Activated naive CD4-positive, alpha-beta T cell treated with anti-CD3 and anti-CD28 coated beads for 36 hours (primary cell): ENCODE measurements at regions of chr2 and their contacts with region 1.

Region 1: GRCh38 chr2:143397884-143398614 is 268.8 kb downstream of the ARHGAP15 start:
- DNase-seq: no peak
- H3K4me3 Mint-ChIP-seq: no peak overlapping the region
- H3K27ac Mint-ChIP-seq: peak overlapping the region; percentile 11
- H3K4me1 Mint-ChIP-seq: peaks cover 47% of the 10 kb centered on the region
- H3K27me3 Mint-ChIP-seq: no peaks in the 10 kb centered on the region

Region 2: DNA sequence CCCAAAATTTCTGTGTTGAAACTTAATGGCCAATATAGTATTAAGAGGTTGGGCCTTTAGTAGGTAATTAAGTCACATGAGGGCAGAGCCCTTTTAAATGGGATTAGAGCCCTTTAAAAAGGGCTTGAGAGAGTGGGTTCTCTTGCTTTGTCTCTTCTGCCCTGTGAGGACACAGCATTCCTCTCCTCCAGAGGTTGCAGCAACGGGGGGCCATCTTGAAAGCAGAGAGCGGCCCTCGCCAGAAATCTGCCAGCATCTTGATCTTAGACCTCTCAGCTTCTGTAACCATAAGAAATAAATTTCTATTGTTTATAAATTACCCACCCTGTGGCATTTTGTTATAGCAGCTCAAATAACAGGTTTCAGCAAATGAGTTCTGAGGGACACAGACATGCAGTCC is 962.2 kb before region 1 on chr2:
- CTCF ChIA-PET with region 1: no interaction called
- intact Hi-C with region 1: no loop called
- DNase-seq: no peak
- H3K4me3 Mint-ChIP-seq: no peak overlapping the region
- H3K27ac Mint-ChIP-seq: no peak overlapping the region
- H3K4me1 Mint-ChIP-seq: no peaks in the 10 kb centered on the region
- H3K27me3 Mint-ChIP-seq: no peaks in the 10 kb centered on the region

Region 3: GRCh38 chr2:142903780-142904179 is 494.3 kb before region 1 on chr2:
- CTCF ChIA-PET with region 1: no interaction called
- intact Hi-C with region 1: no loop called
- DNase-seq: no peak
- H3K4me3 Mint-ChIP-seq: no peak overlapping the region
- H3K27ac Mint-ChIP-seq: no peak overlapping the region
- H3K4me1 Mint-ChIP-seq: no peaks in the 10 kb centered on the region
- H3K27me3 Mint-ChIP-seq: no peaks in the 10 kb centered on the region

Region 4: GRCh38 chr2:143468341-143468888 is 70.4 kb after region 1 on chr2:
- CTCF ChIA-PET with region 1: no interaction called
- intact Hi-C with region 1: loop called (anchors 1 kb)
- DNase-seq: no peak
- H3K4me3 Mint-ChIP-seq: peak overlapping the region; percentile 12
- H3K27ac Mint-ChIP-seq: peak overlapping the region; percentile 50
- H3K4me1 Mint-ChIP-seq: peaks cover 28% of the 10 kb centered on the region
- H3K27me3 Mint-ChIP-seq: no peaks in the 10 kb centered on the region